ENCODE measurements at regions of chr19 and their contacts with region 1.

Region 1: GRCh38 chr19:39341719-39342604 is at the start of gene SAMD4B:
- DNase-seq: peak; percentile 98 to 100 (median 99)
- ATAC-seq: peak; percentile 90
- H3K4me3 ChIP-seq: peak within 1 kb of the TSS; percentile 93 to 97
- H3K4me3 Mint-ChIP-seq: peak within 1 kb of the TSS; percentile 100
- H3K27ac ChIP-seq: peak within 1 kb of the TSS; percentile 67 to 88
- H3K27ac Mint-ChIP-seq: peak within 1 kb of the TSS; percentile 98
- H3K4me1 ChIP-seq: peaks cover 29% of the 10 kb centered on the region
- H3K4me1 Mint-ChIP-seq: peaks cover 69% of the 10 kb centered on the region
- H3K27me3 ChIP-seq: no peaks in the 10 kb centered on the region
- H3K27me3 Mint-ChIP-seq: no peaks in the 10 kb centered on the region
- CTCF ChIP-seq: peak; percentile 73
- total RNA-seq, gene SAMD4B: 68.3 to 78.1 TPM

Region 2: GRCh38 chr19:39199025-39199424 is 142.9 kb before region 1 on chr19:
- CTCF ChIA-PET with region 1: no interaction called
- POLR2A ChIA-PET with region 1: no interaction called
- intact Hi-C with region 1: no loop called
- DNase-seq: no peak
- ATAC-seq: no peak
- H3K4me3 ChIP-seq: no peak overlapping the region
- H3K4me3 Mint-ChIP-seq: no peak overlapping the region
- H3K27ac ChIP-seq: no peak overlapping the region
- H3K27ac Mint-ChIP-seq: no peak overlapping the region
- H3K4me1 ChIP-seq: peaks cover 20% of the 10 kb centered on the region
- H3K4me1 Mint-ChIP-seq: peaks cover 26% of the 10 kb centered on the region
- H3K27me3 ChIP-seq: peaks cover 14 to 30% of the 10 kb centered on the region in 2 experiments
- H3K27me3 Mint-ChIP-seq: peaks cover 63% of the 10 kb centered on the region
- CTCF ChIP-seq: no peak

Region 3: GRCh38 chr19:39390755-39391592 is 49.0 kb after region 1 on chr19 and contains the starts of genes MED29 and PAF1:
- CTCF ChIA-PET with region 1: no interaction called
- POLR2A ChIA-PET with region 1: interaction called, 11 read pairs
- intact Hi-C with region 1: loop called (anchors 1 kb)
- DNase-seq: peak; percentile 89 to 100 (median 94)
- ATAC-seq: peak; percentile 87
- H3K4me3 ChIP-seq: peak within 1 kb of the TSS; percentile 86 to 95
- H3K4me3 Mint-ChIP-seq: peak within 1 kb of the TSS; percentile 96
- H3K27ac ChIP-seq: peak within 1 kb of the TSS; percentile 99
- H3K27ac Mint-ChIP-seq: peak within 1 kb of the TSS; percentile 100
- H3K4me1 ChIP-seq: peaks cover 19% of the 10 kb centered on the region
- H3K4me1 Mint-ChIP-seq: peaks cover 37% of the 10 kb centered on the region
- H3K27me3 ChIP-seq: no peaks in the 10 kb centered on the region
- H3K27me3 Mint-ChIP-seq: no peaks in the 10 kb centered on the region
- CTCF ChIP-seq: no peak
- total RNA-seq, gene MED29: 45.9 to 55.1 TPM
- total RNA-seq, gene PAF1: 109 to 117 TPM

Region 4: GRCh38 chr19:39824143-39825092 is 482.5 kb after region 1 on chr19:
- CTCF ChIA-PET with region 1: no interaction called
- POLR2A ChIA-PET with region 1: no interaction called
- intact Hi-C with region 1: loop called in 1 of 2 experiments (anchors 10 kb)
- DNase-seq: peak; percentile 72 to 94 (median 87)
- ATAC-seq: peak; percentile 98
- H3K4me3 ChIP-seq: peak overlapping the region; percentile 72 to 79
- H3K4me3 Mint-ChIP-seq: no peak overlapping the region
- H3K27ac ChIP-seq: peak overlapping the region; percentile 43 to 45
- H3K27ac Mint-ChIP-seq: no peak overlapping the region
- H3K4me1 ChIP-seq: peaks cover 27% of the 10 kb centered on the region
- H3K4me1 Mint-ChIP-seq: peaks cover 17% of the 10 kb centered on the region
- H3K27me3 ChIP-seq: no peaks in the 10 kb centered on the region
- H3K27me3 Mint-ChIP-seq: no peaks in the 10 kb centered on the region
- CTCF ChIP-seq: no peak

Measured in CD8-positive, alpha-beta T cell (primary cell).